ENCODE measurements at regions of chr15 and their contacts with region 1.

Region 1: GRCh38 chr15:88454867-88455810 is 12.0 kb downstream of the MRPL46 start:
- DNase-seq: peak in 6 of 9 donors; percentile 14 to 38 (median 26)
- ATAC-seq: peak; percentile 85
- H3K4me3 ChIP-seq: no peak overlapping the region
- H3K4me3 Mint-ChIP-seq: no peak overlapping the region
- H3K27ac ChIP-seq: no peak overlapping the region
- H3K27ac Mint-ChIP-seq: peak overlapping the region in 4 of 9 donors; percentile 10 to 72 (median 54)
- H3K4me1 ChIP-seq: no peaks in the 10 kb centered on the region
- H3K4me1 Mint-ChIP-seq: peaks cover 1 to 9% (median 4%) of the 10 kb centered on the region in 7 donors
- H3K27me3 ChIP-seq: no peaks in the 10 kb centered on the region
- H3K27me3 Mint-ChIP-seq: no peaks in the 10 kb centered on the region

Region 2: DNA sequence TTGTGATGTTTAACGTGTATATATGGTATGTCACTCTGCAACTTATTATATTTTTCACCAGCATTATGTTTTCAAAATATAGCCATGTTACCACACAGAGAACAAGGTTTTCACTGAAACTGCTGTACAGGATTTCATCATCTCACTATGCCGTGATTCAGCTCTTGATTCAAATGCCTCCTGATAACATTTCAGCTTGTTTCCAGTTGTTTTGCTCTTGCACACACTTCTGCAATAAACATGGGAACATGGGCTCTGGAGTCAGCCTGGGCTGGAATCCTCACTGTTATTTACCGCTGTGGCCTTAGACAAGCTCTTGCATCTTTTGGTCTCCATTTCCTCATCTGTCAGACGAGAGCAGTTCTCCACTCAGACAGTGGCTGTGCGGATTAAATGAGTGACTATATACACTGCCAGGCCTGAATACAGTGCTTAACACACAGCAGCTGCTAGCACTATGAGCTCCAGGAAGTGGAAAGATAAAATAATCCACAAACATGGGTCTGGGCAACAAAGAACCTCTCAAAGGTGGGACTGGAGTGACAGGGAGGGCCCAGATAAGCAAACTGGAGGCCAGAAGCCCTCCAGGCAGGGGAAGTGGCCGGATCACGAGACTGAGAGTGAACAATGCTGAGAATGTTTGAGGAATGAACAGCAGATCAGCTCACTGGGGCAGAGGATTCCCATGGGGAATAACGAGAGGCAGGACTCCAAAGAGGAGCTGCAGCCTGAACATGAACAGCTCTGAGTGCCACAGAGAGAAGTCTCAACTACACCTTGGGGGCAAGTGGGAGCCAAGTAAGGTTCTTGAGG is 216.3 kb before region 1 on chr15:
- CTCF ChIA-PET with region 1: no interaction called
- POLR2A ChIA-PET with region 1: no interaction called
- intact Hi-C with region 1: loop called (anchors 5 to 10 kb)
- DNase-seq: no peak
- ATAC-seq: no peak
- H3K4me3 ChIP-seq: no peak overlapping the region
- H3K4me3 Mint-ChIP-seq: no peak overlapping the region
- H3K27ac ChIP-seq: no peak overlapping the region
- H3K27ac Mint-ChIP-seq: no peak overlapping the region
- H3K4me1 ChIP-seq: no peaks in the 10 kb centered on the region
- H3K4me1 Mint-ChIP-seq: peaks cover 0 to 1% (median 0%) of the 10 kb centered on the region in 7 donors
- H3K27me3 ChIP-seq: no peaks in the 10 kb centered on the region
- H3K27me3 Mint-ChIP-seq: peaks cover 0 to 45% (median 24%) of the 10 kb centered on the region in 5 donors

Region 3: GRCh38 chr15:88246666-88247446 is 208.3 kb before region 1 on chr15:
- CTCF ChIA-PET with region 1: no interaction called
- POLR2A ChIA-PET with region 1: no interaction called
- intact Hi-C with region 1: loop called in 1 of 2 experiments (anchors 10 kb)
- DNase-seq: peak; percentile 41 to 78 (median 66)
- ATAC-seq: peak; percentile 88
- H3K4me3 ChIP-seq: no peak overlapping the region
- H3K4me3 Mint-ChIP-seq: peak overlapping the region in 3 of 10 donors; percentile 5 to 44 (median 8)
- H3K27ac ChIP-seq: no peak overlapping the region
- H3K27ac Mint-ChIP-seq: peak overlapping the region in 1 of 9 donors; percentile 79
- H3K4me1 ChIP-seq: peaks cover 0 to 3% of the 10 kb centered on the region in 2 donors
- H3K4me1 Mint-ChIP-seq: peaks cover 0 to 8% (median 6%) of the 10 kb centered on the region in 7 donors
- H3K27me3 ChIP-seq: no peaks in the 10 kb centered on the region
- H3K27me3 Mint-ChIP-seq: peaks cover 13 to 31% (median 18%) of the 10 kb centered on the region in 5 donors

Region 4: GRCh38 chr15:88334436-88334835 is 120.7 kb before region 1 on chr15:
- CTCF ChIA-PET with region 1: no interaction called
- POLR2A ChIA-PET with region 1: no interaction called
- intact Hi-C with region 1: no loop called
- DNase-seq: no peak
- ATAC-seq: no peak
- H3K4me3 ChIP-seq: no peak overlapping the region
- H3K4me3 Mint-ChIP-seq: no peak overlapping the region
- H3K27ac ChIP-seq: no peak overlapping the region
- H3K27ac Mint-ChIP-seq: no peak overlapping the region
- H3K4me1 ChIP-seq: no peaks in the 10 kb centered on the region
- H3K4me1 Mint-ChIP-seq: no peaks in the 10 kb centered on the region
- H3K27me3 ChIP-seq: no peaks in the 10 kb centered on the region
- H3K27me3 Mint-ChIP-seq: peaks cover 6 to 38% (median 18%) of the 10 kb centered on the region in 5 donors

Region 5: GRCh38 chr15:88546248-88547129 is 91.3 kb after region 1 on chr15 and contains the start of gene DET1:
- CTCF ChIA-PET with region 1: no interaction called
- POLR2A ChIA-PET with region 1: no interaction called
- intact Hi-C with region 1: no loop called
- DNase-seq: peak; percentile 75 to 94 (median 92)
- ATAC-seq: peak; percentile 97
- H3K4me3 ChIP-seq: peak within 1 kb of the TSS; percentile 66
- H3K4me3 Mint-ChIP-seq: peak within 1 kb of the TSS; percentile 80 to 96 (median 90)
- H3K27ac ChIP-seq: peak within 1 kb of the TSS; percentile 81
- H3K27ac Mint-ChIP-seq: peak within 1 kb of the TSS; percentile 85 to 97 (median 92)
- H3K4me1 ChIP-seq: peaks cover 0 to 5% of the 10 kb centered on the region in 2 donors
- H3K4me1 Mint-ChIP-seq: peaks cover 9 to 24% (median 14%) of the 10 kb centered on the region in 7 donors
- H3K27me3 ChIP-seq: no peaks in the 10 kb centered on the region
- H3K27me3 Mint-ChIP-seq: no peaks in the 10 kb centered on the region
- total RNA-seq, gene DET1: 4.5 to 16.5 (median 8.4) TPM